ENCODE measurements at regions of chr10 and their contacts with region 1.

Region 1: GRCh38 chr10:15427843-15428414 is 56.8 kb upstream of the FAM171A1 start:
- DNase-seq: no peak

Region 2: DNA sequence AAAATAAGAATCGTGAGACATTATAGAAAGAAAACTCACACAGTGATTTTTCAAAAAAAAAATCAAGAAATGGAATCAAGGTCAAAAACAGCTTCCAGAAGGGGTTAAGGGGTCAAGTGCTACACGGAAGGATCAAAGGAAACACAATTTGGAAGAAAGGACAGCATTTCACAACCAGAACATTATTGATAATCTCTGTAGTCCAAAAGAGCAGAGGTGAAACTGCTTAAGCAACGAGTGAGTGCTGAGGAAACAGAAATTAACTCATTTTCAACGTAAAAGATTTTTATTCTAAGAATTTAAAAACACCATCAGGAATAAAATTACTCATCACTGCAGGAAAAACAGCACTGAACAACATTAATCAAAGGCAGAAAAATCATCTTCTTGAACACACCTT is 408.9 kb after region 1 on chr10:
- intact Hi-C with region 1: loop called in 1 of 2 experiments (anchors 10 kb)
- DNase-seq: no peak

Measured in posterior vena cava (tissue), 2 donors.